BJ (cell line): ENCODE measurements at regions of chrX and their contacts with region 1.

Region 1: DNA sequence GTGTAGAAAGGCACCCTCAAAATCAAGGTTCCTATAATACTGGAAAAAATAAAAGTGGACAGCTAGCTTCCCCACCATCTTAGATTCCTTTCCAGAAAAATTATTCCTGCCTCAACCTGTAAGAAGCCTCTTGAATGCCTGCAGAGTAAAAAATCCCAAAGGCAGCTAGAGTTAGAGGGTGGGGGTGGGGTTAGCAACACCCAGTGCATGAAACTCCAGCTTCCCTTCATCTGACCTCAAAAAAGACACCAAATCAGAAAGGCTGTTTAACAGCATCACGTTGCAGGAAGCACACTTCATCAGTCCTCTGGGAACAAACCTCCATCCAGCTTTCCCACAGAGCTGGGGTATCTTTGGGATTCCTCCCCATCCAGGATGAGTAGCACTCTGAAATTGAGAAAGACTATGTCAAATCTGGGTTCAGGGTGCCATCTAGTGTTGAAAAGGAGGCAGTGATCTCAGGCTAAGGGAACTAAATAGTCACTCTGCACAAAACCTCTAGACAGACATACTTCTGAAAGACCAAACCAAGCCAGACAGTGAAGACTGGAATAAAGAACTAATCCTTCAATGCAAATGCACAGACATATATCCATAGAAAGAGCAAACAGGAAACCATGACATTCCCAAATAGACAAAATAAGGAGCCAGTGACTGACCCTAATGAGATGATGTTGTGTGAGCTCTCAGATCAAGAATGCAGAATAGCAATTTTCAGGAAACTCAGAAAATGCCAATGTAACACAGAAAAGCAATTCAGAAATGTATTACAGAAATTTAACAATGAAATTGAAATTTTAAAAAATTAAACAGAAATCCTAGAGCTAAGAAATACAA is 97.9 kb downstream of the ARHGEF9 start:
- DNase-seq: peak; percentile 4
- H3K4me3 ChIP-seq: no peak overlapping the region
- H3K27me3 ChIP-seq: no peaks in the 10 kb centered on the region
- CTCF ChIP-seq: peak; percentile 68

Region 2: GRCh38 chrX:63506320-63506719 is 180.8 kb before region 1 on chrX:
- CTCF ChIA-PET with region 1: interaction called, 14 read pairs
- POLR2A ChIA-PET with region 1: no interaction called
- DNase-seq: no peak
- H3K4me3 ChIP-seq: no peak overlapping the region
- H3K27me3 ChIP-seq: no peaks in the 10 kb centered on the region
- CTCF ChIP-seq: peak; percentile 22; the same call in 1 of the 2 replicates